PC-3 (cell line): ENCODE measurements at regions of chr18 and their contacts with region 1.

Region 1: DNA sequence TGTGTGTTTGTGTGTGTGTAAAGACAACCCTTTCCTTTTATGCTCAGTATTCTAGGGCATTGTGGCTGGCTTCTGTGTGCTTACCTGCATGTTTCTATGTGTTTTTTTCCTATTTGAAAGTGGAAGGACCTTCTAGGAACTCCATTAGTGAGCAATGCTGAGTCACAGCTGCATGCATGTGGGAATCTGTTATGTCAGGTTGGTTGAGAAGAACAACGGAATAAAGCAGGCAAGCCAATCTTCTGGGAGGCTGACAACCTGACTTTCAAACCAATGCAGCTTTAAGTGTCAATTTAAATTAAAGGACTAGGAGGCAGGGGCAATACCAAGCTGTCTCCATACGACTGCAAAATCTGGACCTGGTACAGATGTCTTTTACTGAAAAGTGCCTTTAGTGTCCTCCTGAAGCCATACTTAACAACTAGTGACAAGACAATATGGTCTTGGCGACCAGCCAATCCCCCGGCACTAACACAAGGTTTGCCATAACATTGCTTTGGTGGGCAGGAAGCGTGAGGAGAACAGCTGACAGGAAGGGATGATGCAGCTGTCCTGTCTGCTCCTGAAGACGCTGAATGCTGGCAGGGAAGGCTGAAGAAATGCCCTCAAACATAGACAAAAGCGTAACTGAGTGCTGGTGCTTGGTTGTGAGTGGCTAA is 514.7 kb upstream of the CDH7 start:
- DNase-seq: peak; percentile 62
- ATAC-seq: peak; percentile 88
- H3K4me3 ChIP-seq: no peak overlapping the region
- H3K27ac ChIP-seq: no peak overlapping the region
- H3K4me1 ChIP-seq: no peaks in the 10 kb centered on the region
- H3K27me3 ChIP-seq: no peaks in the 10 kb centered on the region
- CTCF ChIP-seq: no peak

Region 2: DNA sequence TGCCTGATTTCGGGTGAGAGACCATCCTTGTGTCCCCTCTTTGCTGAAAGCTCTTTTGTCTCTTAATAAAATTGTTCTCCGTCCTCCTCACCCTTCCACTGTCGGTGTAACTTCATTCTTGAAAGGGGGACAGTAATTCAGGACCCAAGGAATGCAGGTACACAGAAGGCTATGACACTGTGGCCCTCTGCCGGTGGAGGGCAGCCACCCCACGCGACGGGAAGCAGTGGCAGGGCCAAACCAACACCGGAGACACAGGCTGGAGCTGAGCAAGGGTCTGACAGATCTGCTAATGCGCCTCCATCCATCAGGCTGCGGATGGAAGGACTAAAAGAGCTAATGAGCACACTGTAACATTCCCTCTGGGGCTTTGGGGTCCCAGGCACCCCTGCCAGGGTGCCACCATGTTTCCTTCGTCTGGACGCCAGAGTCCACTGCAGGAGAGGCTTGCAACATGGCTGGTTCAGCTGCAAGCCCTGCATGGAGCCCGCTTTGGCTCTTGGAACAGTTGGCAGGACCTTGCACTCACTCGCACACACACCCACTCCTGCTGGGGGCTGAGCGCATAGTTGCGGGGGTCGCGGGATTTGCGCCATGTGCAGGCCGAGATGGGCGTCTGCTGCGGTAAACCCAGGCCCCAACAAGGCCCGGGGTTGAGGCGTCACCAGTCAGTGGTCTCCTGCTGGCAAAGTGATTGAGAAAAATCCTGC is 29.4 kb before region 1 on chr18:
- CTCF ChIA-PET with region 1: no interaction called
- POLR2A ChIA-PET with region 1: no interaction called
- intact Hi-C with region 1: loop called (anchors 1 kb)
- DNase-seq: peak; percentile 32
- ATAC-seq: peak; percentile 49; the same call in 1 of the 2 replicates
- H3K4me3 ChIP-seq: no peak overlapping the region
- H3K27ac ChIP-seq: no peak overlapping the region
- H3K4me1 ChIP-seq: no peaks in the 10 kb centered on the region
- H3K27me3 ChIP-seq: no peaks in the 10 kb centered on the region
- CTCF ChIP-seq: peak; percentile 63

Region 3: GRCh38 chr18:65439188-65439587 is 203.1 kb after region 1 on chr18:
- CTCF ChIA-PET with region 1: no interaction called
- POLR2A ChIA-PET with region 1: no interaction called
- intact Hi-C with region 1: loop called (anchors 10 kb)
- DNase-seq: peak; percentile 43
- ATAC-seq: peak; percentile 57
- H3K4me3 ChIP-seq: no peak overlapping the region
- H3K27ac ChIP-seq: no peak overlapping the region
- H3K4me1 ChIP-seq: no peaks in the 10 kb centered on the region
- H3K27me3 ChIP-seq: 0 out of 2 replicates have a peak, but pooled peaks cover 3% of the 10 kb centered on the region
- CTCF ChIP-seq: peak; percentile 61